ENCODE measurements at regions of chr17 and their contacts with region 1.

Region 1: DNA sequence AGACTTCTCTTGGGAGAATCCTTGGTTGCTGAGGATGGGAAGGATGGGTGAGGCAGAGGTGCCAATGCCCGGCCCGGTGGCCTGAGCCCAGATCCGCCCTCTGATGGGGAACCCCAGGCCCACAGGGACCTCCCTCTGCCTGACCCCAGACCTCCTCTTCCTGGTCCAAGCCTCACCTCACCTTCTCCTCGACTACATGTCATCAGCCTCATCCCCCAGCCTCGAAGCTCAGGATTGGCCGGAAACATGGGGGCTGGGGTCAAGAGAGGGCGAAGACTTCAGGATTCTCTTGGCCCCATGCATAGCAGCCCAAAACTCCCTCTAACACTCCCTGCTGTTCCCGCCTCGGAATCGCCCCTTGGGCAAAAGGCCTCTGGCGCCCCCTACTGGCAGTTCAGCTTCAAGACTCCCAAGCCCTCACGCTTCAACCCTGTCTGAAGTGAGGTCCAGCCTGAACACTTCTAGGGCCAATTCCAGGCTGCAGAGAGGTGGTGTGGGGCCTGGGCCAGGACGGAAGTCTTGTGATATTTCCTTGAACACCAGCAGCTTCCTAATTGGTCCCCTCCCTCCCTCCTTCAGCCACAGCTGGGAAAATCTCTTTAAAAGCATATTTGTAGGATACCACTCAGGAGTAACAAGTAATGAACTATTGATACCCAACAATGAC is 47.2 kb downstream of the ARHGAP27 start:
- DNase-seq: peak; percentile 91 to 94
- ATAC-seq: peak; percentile 93 to 97
- H3K4me3 ChIP-seq: no peak overlapping the region
- H3K27ac ChIP-seq: peak overlapping the region; percentile 79 to 97
- H3K4me1 ChIP-seq: peaks cover 50% of the 10 kb centered on the region
- CTCF ChIP-seq: peak; percentile 99
- EP300 ChIP-seq: no peak
- POLR2A ChIP-seq: no peak
- RAD21 ChIP-seq: peak; percentile 100

Region 2: DNA sequence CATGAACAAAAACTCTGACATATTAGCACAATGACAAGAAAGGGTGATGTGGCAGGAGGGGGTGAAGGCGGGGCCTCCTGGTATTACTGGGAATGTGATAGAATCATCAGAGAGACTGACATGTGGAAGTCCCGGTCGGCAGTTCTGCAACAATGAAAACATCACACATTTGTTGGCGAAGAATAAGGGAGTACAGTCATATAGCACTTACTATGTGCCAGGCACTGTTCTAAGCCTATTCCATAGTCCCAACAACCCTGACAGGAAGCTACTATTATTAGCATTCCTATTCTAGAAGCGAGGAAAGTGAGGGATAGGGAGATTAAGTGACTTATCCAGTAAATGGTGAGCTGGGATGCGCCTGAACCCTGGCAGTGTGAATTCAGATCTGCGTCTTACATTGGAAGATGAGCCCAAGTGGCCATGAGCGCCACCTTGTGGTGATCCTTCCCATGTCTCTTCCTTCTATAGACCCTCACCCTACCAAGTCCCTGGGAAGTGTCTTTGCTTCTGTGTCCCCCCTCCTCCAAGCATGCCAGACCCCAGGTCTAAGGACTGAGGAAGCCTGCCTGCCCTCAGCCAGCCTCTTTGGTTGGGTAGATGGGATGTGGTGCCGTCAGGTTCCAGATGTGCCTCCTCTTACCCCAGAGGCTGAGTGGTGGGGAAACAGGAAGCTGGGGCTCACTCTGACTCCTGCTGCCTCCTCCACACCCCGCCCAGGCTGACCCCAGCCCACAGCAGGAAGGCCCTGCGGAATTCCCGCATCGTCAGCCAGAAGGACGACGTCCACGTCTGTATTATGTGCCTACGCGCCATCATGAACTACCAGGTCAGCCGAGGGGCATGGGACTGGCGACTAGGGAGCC is 149.8 kb before region 1 on chr17:
- CTCF ChIA-PET with region 1: interaction called, 37 read pairs
- POLR2A ChIA-PET with region 1: no interaction called
- DNase-seq: peak; percentile 87 to 93
- ATAC-seq: peak; percentile 60 to 75
- H3K4me3 ChIP-seq: no peak overlapping the region
- H3K27ac ChIP-seq: peak overlapping the region; percentile 35 to 66; a peak in 5 of 6 replicates
- H3K4me1 ChIP-seq: peaks cover 33% of the 10 kb centered on the region
- CTCF ChIP-seq: peak; percentile 95
- EP300 ChIP-seq: no peak
- POLR2A ChIP-seq: no peak
- RAD21 ChIP-seq: peak; percentile 79 to 82

Region 3: GRCh38 chr17:45247429-45248131 is 137.9 kb before region 1 on chr17:
- CTCF ChIA-PET with region 1: interaction called, 128 read pairs
- POLR2A ChIA-PET with region 1: no interaction called
- DNase-seq: peak; percentile 99 to 100
- ATAC-seq: peak; percentile 79 to 91
- H3K4me3 ChIP-seq: peak overlapping the region; percentile 89
- H3K27ac ChIP-seq: peak overlapping the region; percentile 93 to 96
- H3K4me1 ChIP-seq: peaks cover 49% of the 10 kb centered on the region
- CTCF ChIP-seq: no peak
- EP300 ChIP-seq: peak; percentile 78 to 91; a peak in 3 of 5 replicates
- POLR2A ChIP-seq: peak; percentile 70
- RAD21 ChIP-seq: no peak; a peak in 1 of 5 replicates

Region 4: DNA sequence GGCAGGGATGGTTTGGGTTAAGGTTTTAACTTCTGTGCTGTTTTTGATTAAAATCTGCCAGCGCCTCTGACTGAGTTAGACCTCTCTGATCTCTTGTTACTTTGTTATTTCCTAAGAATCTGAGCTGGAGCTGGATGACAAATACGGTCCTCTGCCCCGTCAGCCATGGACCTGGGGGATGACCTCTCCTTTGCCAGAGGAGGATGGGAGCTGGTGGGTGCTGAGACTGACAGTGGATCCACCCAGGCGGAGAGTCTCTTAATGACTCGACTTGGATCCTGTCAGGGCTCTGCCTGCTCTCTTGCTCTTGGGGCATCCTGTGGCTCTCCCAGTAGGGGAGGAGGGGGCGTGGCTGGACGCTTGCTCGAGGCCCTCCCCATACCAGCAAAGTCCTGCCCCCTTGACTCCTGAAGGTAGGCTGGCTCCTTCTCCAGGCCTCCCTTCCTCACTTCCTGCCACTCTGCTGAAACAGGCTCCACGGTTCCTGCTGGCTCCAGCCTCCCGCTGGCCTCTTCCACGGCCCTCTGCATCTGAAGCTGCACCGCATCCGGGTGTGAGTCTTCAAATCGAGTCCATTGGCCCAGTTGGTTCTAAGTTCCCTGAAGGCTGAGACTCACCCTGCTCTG is 43.8 kb before region 1 on chr17:
- CTCF ChIA-PET with region 1: interaction called, 640 read pairs
- POLR2A ChIA-PET with region 1: no interaction called
- DNase-seq: peak; percentile 94 to 96
- ATAC-seq: peak; percentile 98 to 99
- H3K4me3 ChIP-seq: peak overlapping the region; percentile 37
- H3K27ac ChIP-seq: peak overlapping the region; percentile 89 to 91
- H3K4me1 ChIP-seq: peaks cover 39% of the 10 kb centered on the region
- CTCF ChIP-seq: no peak
- EP300 ChIP-seq: no peak
- POLR2A ChIP-seq: peak; percentile 91
- RAD21 ChIP-seq: 0 out of 5 replicates have a peak, but pooled peaks of 1 of the 2 experiments have one; percentile 29